Panc1 (cell line): ENCODE measurements at regions of chr15 and their contacts with region 1.

Region 1: GRCh38 chr15:47987908-47988532 is 132.8 kb upstream of the SLC24A5 start:
- DNase-seq: peak; percentile 8
- ATAC-seq: peak; percentile 89
- H3K4me3 ChIP-seq: no peak overlapping the region
- H3K27ac ChIP-seq: no peak overlapping the region
- H3K4me1 ChIP-seq: no peaks in the 10 kb centered on the region
- H3K27me3 ChIP-seq: no peaks in the 10 kb centered on the region
- CTCF ChIP-seq: peak; percentile 77

Region 2: DNA sequence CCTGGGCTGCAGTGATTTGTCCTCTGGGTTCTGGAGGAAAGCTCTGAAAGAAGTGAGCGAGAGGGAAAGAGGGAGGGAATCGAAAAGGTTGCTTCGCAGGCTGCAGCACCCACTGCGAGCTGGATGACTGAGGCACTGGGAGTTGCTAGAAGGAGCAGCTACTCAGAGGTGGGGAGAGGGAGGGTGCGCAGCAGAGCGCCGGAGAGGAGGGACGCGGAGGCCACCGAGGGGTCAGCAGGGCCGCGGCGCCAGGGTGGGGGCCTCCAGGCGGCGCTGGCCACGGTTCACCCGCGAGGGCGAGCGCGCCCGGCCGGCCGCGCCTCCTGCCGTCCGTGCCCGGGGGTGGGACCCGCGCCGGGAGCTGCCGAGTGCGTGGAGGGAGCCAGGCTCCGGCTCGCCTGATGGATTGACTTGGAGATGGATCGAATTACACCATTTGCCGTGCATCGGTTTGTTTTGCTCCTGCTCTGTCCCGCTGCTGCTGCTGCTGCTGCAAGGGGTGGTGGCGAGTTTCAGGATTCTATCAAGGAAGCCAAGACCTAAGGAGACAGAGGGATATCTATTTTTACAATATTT is 270.9 kb before region 1 on chr15 and contains the start of gene SEMA6D:
- CTCF ChIA-PET with region 1: interaction called, 3 read pairs
- POLR2A ChIA-PET with region 1: no interaction called
- in situ Hi-C with region 1: no loop called
- intact Hi-C with region 1: loop called (anchors 10 kb)
- DNase-seq: no peak
- ATAC-seq: peak; percentile 82
- H3K4me3 ChIP-seq: peak within 1 kb of the TSS; percentile 34 to 40
- H3K27ac ChIP-seq: no peak within 1 kb of the TSS
- H3K4me1 ChIP-seq: no peaks in the 10 kb centered on the region
- H3K27me3 ChIP-seq: peaks cover 20% of the 10 kb centered on the region
- CTCF ChIP-seq: peak; percentile 44
- total RNA-seq, gene SEMA6D: 0.03 TPM

Region 3: GRCh38 chr15:47961401-47962090 is 26.5 kb before region 1 on chr15:
- CTCF ChIA-PET with region 1: no interaction called
- POLR2A ChIA-PET with region 1: no interaction called
- in situ Hi-C with region 1: no loop called
- intact Hi-C with region 1: no loop called
- DNase-seq: no peak
- ATAC-seq: no peak
- H3K4me3 ChIP-seq: no peak overlapping the region
- H3K27ac ChIP-seq: no peak overlapping the region
- H3K4me1 ChIP-seq: no peaks in the 10 kb centered on the region
- H3K27me3 ChIP-seq: no peaks in the 10 kb centered on the region
- CTCF ChIP-seq: no peak